SK-N-SH (cell line): ENCODE measurements at regions of chr1 and their contacts with region 1.

Region 1: GRCh38 chr1:236603991-236604904 is at the start of gene HEATR1:
- DNase-seq: peak; percentile 86
- H3K4me3 ChIP-seq: peak within 1 kb of the TSS; percentile 74 to 76
- H3K27ac ChIP-seq: peak within 1 kb of the TSS; percentile 52 to 85; a peak in 3 of 4 replicates
- H3K4me1 ChIP-seq: peaks cover 0 to 5% of the 10 kb centered on the region in 2 experiments; a peak in 2 of 4 replicates
- H3K27me3 ChIP-seq: no peaks in the 10 kb centered on the region
- CTCF ChIP-seq: no peak
- EP300 ChIP-seq: no peak; a peak in 1 of 4 replicates
- RAD21 ChIP-seq: no peak
- polyA plus RNA-seq, gene HEATR1: 10.6 and 15.2 TPM in 2 replicates

Region 2: DNA sequence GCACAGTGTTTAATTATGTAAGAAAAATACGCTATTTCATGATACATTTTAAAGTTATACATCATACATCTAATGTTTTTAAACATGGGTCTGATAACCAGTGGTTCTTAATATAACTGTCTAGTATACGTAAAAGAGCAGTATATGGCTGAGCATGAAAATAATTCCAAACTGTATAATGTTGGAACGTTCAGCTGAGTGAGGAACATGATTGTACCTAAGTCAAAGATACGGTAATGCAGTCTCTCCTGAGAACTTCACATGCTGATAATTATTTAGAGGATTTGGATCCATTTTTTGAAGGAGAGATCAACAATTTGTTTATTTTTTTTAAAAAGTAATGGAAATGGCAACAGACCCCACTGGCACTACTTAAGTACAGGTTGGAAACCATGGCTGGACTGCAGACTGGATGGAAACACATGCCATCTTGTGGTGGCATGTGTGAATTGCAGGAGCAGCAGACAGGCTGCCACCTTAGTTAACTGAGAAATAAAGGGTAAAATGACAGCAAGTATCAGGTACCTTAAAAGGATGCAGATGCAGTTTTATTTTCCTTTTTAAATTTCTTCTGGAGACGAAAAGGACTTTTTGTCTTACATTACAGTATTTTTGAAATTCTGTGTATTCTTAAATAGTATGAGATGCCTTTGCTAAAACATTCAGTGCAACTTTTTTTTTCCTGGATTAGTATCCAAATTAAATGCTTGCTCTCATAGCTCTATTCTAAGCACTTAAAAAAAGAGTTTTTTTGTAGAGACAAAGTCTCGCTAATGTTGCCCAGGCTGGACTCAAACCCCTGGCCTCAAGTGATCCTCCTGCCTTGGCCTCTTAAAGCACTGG is 264.6 kb after region 1 on chr1:
- CTCF ChIA-PET with region 1: interaction called, 20 read pairs
- POLR2A ChIA-PET with region 1: no interaction called
- DNase-seq: peak; percentile 53
- H3K4me3 ChIP-seq: peak overlapping the region in 1 of 2 experiments; percentile 28; a peak in 1 of 4 replicates
- H3K27ac ChIP-seq: no peak overlapping the region
- H3K4me1 ChIP-seq: peaks cover 0 to 2% of the 10 kb centered on the region in 2 experiments; a peak in 2 of 4 replicates
- H3K27me3 ChIP-seq: no peaks in the 10 kb centered on the region
- CTCF ChIP-seq: peak; percentile 90
- EP300 ChIP-seq: no peak
- RAD21 ChIP-seq: peak; percentile 86